ENCODE measurements at regions of chr2 and their contacts with region 1.

Region 1: DNA sequence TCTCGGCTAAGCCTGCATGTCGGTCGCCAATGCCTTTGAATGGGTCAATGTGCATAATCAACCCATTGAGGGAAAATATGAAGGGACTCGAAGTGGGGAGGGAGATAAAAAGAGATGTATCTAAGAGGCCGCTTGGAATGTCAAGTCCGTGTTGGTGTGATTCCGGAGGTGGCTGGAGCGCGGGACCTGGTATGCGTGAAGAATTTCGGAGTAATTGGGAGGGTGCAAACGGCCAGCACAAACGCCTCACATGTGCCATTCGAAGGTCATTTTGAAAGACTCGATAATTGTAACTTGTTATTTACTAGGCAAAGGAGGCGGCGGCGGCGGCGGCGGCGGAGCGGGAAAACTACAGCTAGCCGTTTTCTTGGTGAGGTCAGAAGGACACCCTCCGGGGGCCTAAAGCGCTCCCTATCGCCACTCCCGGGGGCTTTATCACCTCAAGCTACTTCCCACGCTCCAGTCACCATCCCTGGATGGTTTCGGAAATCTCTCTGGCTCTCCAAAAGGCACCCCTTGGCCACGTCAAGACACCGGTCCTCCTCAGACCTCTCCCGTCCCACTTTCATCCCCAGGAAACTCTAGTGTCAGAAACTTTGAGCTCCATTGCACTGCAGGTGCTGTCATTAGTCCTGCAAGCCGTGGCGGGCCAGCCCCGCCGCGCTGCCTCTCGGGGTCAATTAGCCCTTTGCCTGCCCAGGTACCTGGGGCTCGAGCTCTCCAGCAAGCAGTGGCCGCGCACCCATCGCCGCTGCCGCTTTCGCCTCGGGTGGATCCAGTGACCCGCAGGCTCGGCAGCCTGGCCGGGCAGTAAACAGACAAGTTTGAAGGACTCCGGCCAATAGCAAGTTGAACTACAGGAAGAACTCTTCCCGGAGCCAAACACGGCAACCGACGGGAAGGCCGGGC is 1.5 kb downstream of the ERBB4 start:
- DNase-seq: no peak
- H3K4me3 ChIP-seq: peak overlapping the region; percentile 95
- H3K27ac ChIP-seq: peak overlapping the region; percentile 88
- H3K4me1 ChIP-seq: peaks cover 38% of the 10 kb centered on the region
- H3K27me3 ChIP-seq: no peaks in the 10 kb centered on the region
- CTCF ChIP-seq: 0 out of 2 replicates have a peak, but pooled peaks have one; percentile 1

Region 2: GRCh38 chr2:211455216-211455841 is 1081.7 kb before region 1 on chr2:
- CTCF ChIA-PET with region 1: no interaction called
- POLR2A ChIA-PET with region 1: no interaction called
- intact Hi-C with region 1: loop called (anchors 10 kb)
- DNase-seq: peak; percentile 84
- H3K4me3 ChIP-seq: peak overlapping the region; percentile 4
- H3K27ac ChIP-seq: peak overlapping the region; percentile 54
- H3K4me1 ChIP-seq: peaks cover 26% of the 10 kb centered on the region
- H3K27me3 ChIP-seq: no peaks in the 10 kb centered on the region
- CTCF ChIP-seq: peak; percentile 97

Region 3: GRCh38 chr2:211879323-211879722 is 657.7 kb before region 1 on chr2:
- CTCF ChIA-PET with region 1: no interaction called
- POLR2A ChIA-PET with region 1: no interaction called
- intact Hi-C with region 1: loop called (anchors 5 kb)
- DNase-seq: peak; percentile 63
- H3K4me3 ChIP-seq: no peak overlapping the region
- H3K27ac ChIP-seq: no peak overlapping the region
- H3K4me1 ChIP-seq: peaks cover 9% of the 10 kb centered on the region
- H3K27me3 ChIP-seq: no peaks in the 10 kb centered on the region
- CTCF ChIP-seq: peak; percentile 60

Region 4: GRCh38 chr2:212227755-212228154 is 309.3 kb before region 1 on chr2:
- CTCF ChIA-PET with region 1: no interaction called
- POLR2A ChIA-PET with region 1: no interaction called
- intact Hi-C with region 1: loop called (anchors 5 kb)
- DNase-seq: peak; percentile 95
- H3K4me3 ChIP-seq: peak overlapping the region; percentile 8
- H3K27ac ChIP-seq: peak overlapping the region; percentile 78
- H3K4me1 ChIP-seq: peaks cover 62% of the 10 kb centered on the region
- H3K27me3 ChIP-seq: no peaks in the 10 kb centered on the region
- CTCF ChIP-seq: no peak

Region 5: DNA sequence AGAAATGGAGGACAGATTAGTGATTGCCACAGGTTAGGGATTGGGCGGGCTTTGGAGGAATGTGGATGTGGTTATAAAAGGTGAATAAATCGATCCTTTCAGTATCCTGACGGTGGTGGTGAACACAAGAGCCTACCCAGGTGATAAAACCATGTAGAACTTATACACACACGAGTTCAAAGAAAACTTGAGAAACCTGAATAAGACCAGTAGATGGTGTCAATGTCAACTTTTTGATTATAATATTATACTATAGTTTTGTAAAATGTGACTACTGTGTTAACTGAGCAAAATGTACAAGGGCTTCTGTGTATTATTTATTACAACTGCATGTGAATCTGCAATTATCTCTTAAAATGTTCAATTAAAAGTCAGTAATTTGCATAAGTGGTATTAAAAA is 134.8 kb before region 1 on chr2:
- CTCF ChIA-PET with region 1: no interaction called
- POLR2A ChIA-PET with region 1: no interaction called
- intact Hi-C with region 1: loop called (anchors 10 kb)
- DNase-seq: peak; percentile 28
- H3K4me3 ChIP-seq: no peak overlapping the region
- H3K27ac ChIP-seq: no peak overlapping the region
- H3K4me1 ChIP-seq: no peaks in the 10 kb centered on the region
- H3K27me3 ChIP-seq: no peaks in the 10 kb centered on the region
- CTCF ChIP-seq: no peak; the same call in 1 of the 2 replicates

Measured in A673 (cell line).